HAP-1 (cell line): ENCODE measurements at regions of chr12 and their contacts with region 1.

Region 1: GRCh38 chr12:110079477-110080400 is 31.4 kb upstream of the C12orf76 start:
- DNase-seq: peak; percentile 4 to 46
- H3K4me3 ChIP-seq: no peak overlapping the region
- H3K4me1 ChIP-seq: peaks cover 4% of the 10 kb centered on the region
- H3K27me3 ChIP-seq: no peaks in the 10 kb centered on the region

Region 2: GRCh38 chr12:110613771-110614684 is 534.3 kb after region 1 on chr12 and contains the start of gene TCTN1:
- in situ Hi-C with region 1: loop called (anchors 25 kb)
- DNase-seq: peak; percentile 95 to 99
- H3K4me3 ChIP-seq: peak within 1 kb of the TSS; percentile 50
- H3K4me1 ChIP-seq: peaks cover 7% of the 10 kb centered on the region
- H3K27me3 ChIP-seq: no peaks in the 10 kb centered on the region